PC-3 (cell line): ENCODE measurements at regions of chr21 and their contacts with region 1.

Region 1: GRCh38 chr21:15058854-15059263 is 5.9 kb downstream of the NRIP1 start:
- DNase-seq: peak; percentile 88
- ATAC-seq: peak; percentile 47
- H3K4me3 ChIP-seq: peak overlapping the region; percentile 85
- H3K27ac ChIP-seq: peak overlapping the region; percentile 53
- H3K4me1 ChIP-seq: peaks cover 75% of the 10 kb centered on the region
- H3K27me3 ChIP-seq: no peaks in the 10 kb centered on the region
- CTCF ChIP-seq: no peak

Region 2: GRCh38 chr21:14645702-14646101 is 413.2 kb before region 1 on chr21:
- CTCF ChIA-PET with region 1: no interaction called
- POLR2A ChIA-PET with region 1: no interaction called
- intact Hi-C with region 1: no loop called
- DNase-seq: no peak
- ATAC-seq: no peak
- H3K4me3 ChIP-seq: no peak overlapping the region
- H3K27ac ChIP-seq: no peak overlapping the region
- H3K4me1 ChIP-seq: no peaks in the 10 kb centered on the region
- H3K27me3 ChIP-seq: no peaks in the 10 kb centered on the region
- CTCF ChIP-seq: no peak

Region 3: GRCh38 chr21:14877570-14878228 is 181.2 kb before region 1 on chr21:
- CTCF ChIA-PET with region 1: no interaction called
- POLR2A ChIA-PET with region 1: no interaction called
- intact Hi-C with region 1: loop called (anchors 1 kb)
- DNase-seq: peak; percentile 97
- ATAC-seq: peak; percentile 62
- H3K4me3 ChIP-seq: peak overlapping the region; percentile 35
- H3K27ac ChIP-seq: peak overlapping the region; percentile 94
- H3K4me1 ChIP-seq: peaks cover 88% of the 10 kb centered on the region
- H3K27me3 ChIP-seq: no peaks in the 10 kb centered on the region
- CTCF ChIP-seq: no peak

Region 4: DNA sequence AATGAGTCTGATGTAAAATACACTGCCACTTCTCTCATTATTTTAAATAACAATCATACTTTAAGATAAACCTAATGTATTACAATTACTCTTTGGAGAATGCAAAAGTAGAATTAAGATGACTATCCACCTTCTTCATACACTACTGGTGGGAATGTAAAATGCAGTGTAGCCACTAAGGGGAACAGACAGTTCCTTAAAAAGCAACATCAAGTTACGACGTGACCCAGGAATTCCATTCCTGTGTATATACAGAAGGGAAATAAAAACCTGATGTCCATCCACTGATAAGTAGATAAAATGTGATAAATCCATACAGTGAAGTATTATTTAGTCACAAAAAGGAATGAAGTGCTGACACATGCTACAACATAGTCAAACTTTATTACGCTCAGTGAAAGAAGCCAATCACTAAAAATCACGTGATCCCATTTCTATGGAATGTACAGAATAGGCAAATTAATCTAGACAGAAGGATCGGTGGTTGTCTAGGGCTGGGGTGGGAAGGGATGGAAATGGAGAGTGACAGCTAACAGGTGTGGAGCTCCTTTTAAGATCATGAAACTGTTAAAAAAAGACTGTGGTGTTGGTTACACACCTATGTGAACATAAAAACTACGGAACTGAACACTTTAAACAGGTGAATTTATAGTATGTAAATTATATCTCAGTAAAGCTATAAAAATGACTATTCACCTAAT is 36.1 kb before region 1 on chr21:
- CTCF ChIA-PET with region 1: no interaction called
- POLR2A ChIA-PET with region 1: no interaction called
- intact Hi-C with region 1: loop called (anchors 5 kb)
- DNase-seq: no peak
- ATAC-seq: no peak
- H3K4me3 ChIP-seq: no peak overlapping the region
- H3K27ac ChIP-seq: no peak overlapping the region
- H3K4me1 ChIP-seq: peaks cover 7% of the 10 kb centered on the region; the same call in 1 of the 2 replicates
- H3K27me3 ChIP-seq: no peaks in the 10 kb centered on the region
- CTCF ChIP-seq: no peak

Region 5: GRCh38 chr21:15034126-15034853 is 24.6 kb before region 1 on chr21:
- CTCF ChIA-PET with region 1: no interaction called
- POLR2A ChIA-PET with region 1: interaction called, 3 read pairs
- intact Hi-C with region 1: loop called (anchors 2 kb)
- DNase-seq: peak; percentile 64
- ATAC-seq: peak; percentile 90
- H3K4me3 ChIP-seq: 0 out of 2 replicates have a peak overlapping the region, but pooled peaks have one; percentile 8
- H3K27ac ChIP-seq: peak overlapping the region; percentile 63
- H3K4me1 ChIP-seq: peaks cover 25% of the 10 kb centered on the region
- H3K27me3 ChIP-seq: no peaks in the 10 kb centered on the region
- CTCF ChIP-seq: no peak

Region 6: DNA sequence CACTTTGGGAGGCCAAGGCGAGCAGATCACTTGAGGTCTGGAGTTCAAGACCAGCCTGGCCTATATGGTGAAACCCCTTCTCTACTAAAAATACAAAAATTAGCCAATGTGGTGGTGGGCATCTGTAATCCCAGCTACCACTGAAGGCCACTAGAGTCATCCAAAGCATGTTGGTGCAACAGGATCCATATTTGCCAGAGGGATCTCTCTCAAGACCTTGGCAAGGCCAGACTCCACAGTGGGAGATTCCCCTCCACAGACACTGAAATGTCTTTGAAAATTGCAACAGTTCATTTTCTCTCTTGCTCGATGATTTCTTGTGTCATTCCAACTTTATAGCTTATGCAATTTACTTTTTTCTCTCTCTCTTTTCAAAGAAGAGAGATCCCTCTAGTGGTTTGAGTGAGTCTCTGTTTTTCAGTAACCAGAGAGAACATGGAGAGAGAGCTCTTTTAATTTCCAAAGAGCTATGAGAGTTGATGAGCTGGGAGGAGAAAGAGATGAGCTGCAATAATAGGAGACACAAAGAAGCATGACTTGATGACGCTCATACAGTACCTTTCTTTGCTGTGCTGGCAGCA is 494.1 kb after region 1 on chr21:
- CTCF ChIA-PET with region 1: interaction called, 8 read pairs
- POLR2A ChIA-PET with region 1: no interaction called
- intact Hi-C with region 1: loop called (anchors 1 kb)
- DNase-seq: peak; percentile 61
- ATAC-seq: peak; percentile 72
- H3K4me3 ChIP-seq: no peak overlapping the region
- H3K27ac ChIP-seq: no peak overlapping the region
- H3K4me1 ChIP-seq: no peaks in the 10 kb centered on the region
- H3K27me3 ChIP-seq: no peaks in the 10 kb centered on the region
- CTCF ChIP-seq: peak; percentile 91